Posterior cingulate gyrus (tissue), 11 donors: ENCODE measurements at regions of chr7 and their contacts with region 1.

Region 1: GRCh38 chr7:8564281-8564680 is 130.9 kb downstream of the NXPH1 start:
- DNase-seq: no peak

Region 2: DNA sequence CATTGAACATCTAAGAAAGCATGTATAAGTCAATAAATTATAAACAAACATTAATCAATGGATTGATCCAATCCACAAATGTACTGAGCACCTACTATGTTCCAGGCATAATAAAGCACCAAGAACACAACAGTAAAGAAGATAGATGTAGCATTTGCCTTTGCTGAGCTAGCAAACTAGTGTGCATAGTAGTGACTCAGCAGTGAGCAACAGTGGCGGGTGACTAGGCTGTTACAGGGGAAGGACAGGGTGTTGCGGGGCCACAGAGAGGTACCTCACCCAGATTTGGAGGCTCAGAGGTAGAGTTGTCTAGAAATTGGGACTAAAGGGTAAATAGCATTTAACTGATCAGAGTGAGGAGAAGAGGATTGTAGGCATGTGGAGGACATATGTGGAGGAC is 47.3 kb before region 1 on chr7:
- intact Hi-C with region 1: no loop called
- DNase-seq: no peak

Region 3: DNA sequence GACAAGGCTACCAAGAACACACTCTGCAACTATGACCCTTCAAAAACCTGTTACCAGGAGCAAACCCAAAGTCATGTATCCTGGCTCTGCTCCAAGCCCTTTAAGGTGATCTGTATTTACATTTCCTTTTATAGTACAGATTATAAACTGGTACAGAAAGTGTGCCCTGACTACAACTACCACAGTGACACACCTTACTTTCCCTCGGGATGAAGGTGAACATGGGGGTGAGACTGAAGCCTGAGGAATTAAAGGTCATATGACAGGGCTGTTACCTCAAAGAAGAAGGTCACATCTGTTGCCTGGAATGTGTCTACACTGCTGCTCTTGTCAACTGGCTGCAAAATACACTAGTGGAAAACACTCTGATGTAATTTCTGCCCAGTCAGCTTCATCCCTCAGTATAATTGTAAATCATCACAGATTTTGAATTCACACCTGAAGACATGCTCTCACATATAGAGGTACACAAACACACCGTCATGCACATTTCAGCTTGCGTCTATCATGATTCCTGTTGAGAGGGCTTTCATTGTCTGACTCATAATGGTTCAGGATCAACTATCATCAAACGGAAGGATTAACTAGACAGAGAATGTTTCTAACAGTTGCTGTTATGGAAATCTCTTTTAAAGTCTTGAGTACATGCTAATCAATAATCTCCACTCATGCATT is 187.4 kb after region 1 on chr7:
- intact Hi-C with region 1: no loop called
- DNase-seq: no peak

Region 4: DNA sequence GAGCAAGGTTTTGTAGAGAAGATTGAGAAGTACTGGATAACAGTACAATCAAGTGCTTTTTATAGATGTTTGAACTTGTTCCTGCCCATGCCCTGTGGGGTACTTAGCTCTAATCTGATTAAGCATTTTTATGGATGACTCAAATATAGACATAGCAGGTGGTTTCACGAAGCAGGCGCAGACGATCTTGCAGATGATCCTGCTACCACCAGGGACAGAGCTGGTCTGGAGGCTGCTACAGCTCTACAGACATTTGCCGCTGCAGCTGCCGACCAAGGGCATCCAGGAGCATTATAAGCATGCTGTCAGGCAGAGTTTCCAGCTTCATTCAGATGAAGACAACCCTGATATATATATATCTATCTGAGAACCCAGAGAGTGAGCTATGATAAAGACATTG is 519.5 kb after region 1 on chr7:
- intact Hi-C with region 1: loop called (anchors 5 kb)
- DNase-seq: peak in 1 of 10 donors; percentile 26

Region 5: GRCh38 chr7:9307131-9307530 is 742.9 kb after region 1 on chr7:
- intact Hi-C with region 1: no loop called
- DNase-seq: no peak